ENCODE measurements at regions of chr17 and their contacts with region 1.

Region 1: DNA sequence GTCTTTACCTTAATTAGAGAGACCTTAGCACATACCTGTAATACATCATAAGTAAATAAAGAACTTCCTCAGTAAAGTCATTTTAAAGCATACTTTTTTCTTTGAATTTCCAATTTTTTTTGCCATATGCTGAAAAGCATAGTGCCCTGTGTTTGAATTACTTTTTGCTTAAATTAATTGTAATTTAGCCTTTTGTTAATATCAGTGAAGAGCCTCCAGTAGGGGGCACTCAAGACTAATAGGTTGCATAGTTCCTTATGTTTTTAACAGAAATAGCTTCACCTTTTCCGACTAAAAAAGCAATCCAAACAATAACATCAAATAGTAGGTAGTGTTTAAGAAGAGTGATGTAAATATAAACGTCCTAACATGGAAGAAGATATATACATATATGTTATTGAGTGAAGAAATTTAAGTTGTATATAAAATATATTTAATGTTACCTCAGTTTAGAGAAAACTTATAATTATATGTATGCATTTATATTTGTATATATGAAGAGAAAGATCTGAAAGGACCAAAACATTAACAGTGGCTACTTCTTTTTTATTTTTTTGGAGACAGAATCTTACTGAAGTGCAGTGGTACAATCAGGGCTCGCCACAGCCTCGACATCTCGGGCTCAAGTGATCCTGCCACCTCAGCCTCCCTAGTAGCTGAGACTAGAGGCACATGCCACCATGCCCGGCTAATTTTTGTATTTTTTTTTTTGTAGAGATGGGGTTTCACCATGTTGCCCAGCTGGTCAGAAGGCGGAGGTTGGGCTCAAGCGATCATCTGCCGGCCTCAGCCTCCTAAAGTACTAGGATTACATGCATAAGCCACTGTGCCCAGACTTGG is 18.8 kb downstream of the RAD51C start:
- DNase-seq: peak; percentile 17
- H3K27ac ChIP-seq: no peak overlapping the region
- CTCF ChIP-seq: peak; percentile 87

Region 2: GRCh38 chr17:58352014-58352842 is 358.9 kb before region 1 on chr17 and contains the start of gene SUPT4H1:
- CTCF ChIA-PET with region 1: no interaction called
- POLR2A ChIA-PET with region 1: no interaction called
- DNase-seq: peak; percentile 96
- H3K27ac ChIP-seq: peak within 1 kb of the TSS; percentile 86
- CTCF ChIP-seq: no peak

Region 3: DNA sequence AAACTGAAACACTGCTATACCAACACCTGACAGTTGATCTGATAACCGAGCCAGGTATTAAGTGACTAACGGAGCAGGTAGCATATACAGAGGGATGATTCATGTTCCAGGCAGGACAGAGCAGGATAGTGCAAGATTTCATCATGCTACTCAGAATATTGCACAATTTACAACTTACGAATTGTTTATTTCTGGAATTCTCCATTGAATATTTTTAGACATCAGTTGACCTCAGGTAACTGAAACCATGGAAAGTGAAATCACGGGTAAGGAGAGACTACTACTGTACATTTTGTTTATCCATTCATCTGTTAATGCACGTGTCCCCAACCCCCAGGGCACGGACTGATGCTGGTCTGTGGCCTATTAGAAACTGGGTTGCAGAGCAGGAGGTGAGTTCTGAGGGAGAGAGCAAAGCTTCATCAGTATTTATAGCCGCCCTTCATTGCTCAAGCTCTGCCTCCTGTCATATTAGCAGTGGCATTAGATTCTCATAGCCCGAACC is 30.0 kb after region 1 on chr17:
- CTCF ChIA-PET with region 1: interaction called, 10 read pairs
- POLR2A ChIA-PET with region 1: no interaction called
- DNase-seq: peak; percentile 86
- H3K27ac ChIP-seq: peak overlapping the region; percentile 50; the same call in 1 of the 2 replicates
- CTCF ChIP-seq: no peak

Region 4: DNA sequence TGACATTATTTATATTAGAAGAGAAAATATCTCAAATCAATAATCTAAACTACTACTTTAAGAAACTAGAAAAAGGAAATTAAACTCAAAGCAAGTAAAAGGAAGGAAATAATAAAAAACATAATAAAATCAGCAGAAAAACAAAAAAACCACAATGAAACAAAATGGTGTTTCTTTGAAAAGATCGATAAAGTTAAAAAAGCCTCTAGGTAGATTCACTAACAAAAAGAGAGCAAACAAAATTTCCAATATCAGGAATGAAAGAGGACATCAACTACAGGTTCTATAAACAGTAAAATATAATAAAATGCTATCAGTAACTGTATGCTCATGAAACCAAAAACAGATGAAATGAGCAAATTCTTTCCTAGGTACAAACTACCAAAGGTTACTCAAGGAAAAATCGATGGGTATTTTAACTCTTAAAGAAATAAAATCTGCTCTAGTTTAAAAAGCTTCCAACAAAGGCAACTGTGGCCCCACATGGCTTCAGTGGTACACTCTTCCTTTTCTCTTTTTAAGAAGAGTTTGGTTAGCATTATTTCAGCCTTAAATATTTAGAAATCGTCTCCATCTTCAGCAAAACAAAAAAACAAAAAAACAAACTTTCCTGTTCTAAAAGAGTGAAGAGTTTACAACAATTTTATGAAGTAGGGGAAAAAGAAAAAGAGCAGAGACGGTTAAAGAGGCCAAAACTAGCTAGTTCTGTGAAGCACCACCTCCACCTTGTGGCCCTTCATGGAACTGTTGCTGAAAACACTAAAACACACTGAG is 293.4 kb after region 1 on chr17:
- CTCF ChIA-PET with region 1: interaction called, 35 read pairs
- POLR2A ChIA-PET with region 1: no interaction called
- DNase-seq: peak; percentile 42
- H3K27ac ChIP-seq: no peak overlapping the region
- CTCF ChIP-seq: peak; percentile 97

Measured in RWPE1 (cell line).